Naive thymus-derived CD4-positive, alpha-beta T cell (primary cell): ENCODE measurements at regions of chr9 and their contacts with region 1.

Region 1: DNA sequence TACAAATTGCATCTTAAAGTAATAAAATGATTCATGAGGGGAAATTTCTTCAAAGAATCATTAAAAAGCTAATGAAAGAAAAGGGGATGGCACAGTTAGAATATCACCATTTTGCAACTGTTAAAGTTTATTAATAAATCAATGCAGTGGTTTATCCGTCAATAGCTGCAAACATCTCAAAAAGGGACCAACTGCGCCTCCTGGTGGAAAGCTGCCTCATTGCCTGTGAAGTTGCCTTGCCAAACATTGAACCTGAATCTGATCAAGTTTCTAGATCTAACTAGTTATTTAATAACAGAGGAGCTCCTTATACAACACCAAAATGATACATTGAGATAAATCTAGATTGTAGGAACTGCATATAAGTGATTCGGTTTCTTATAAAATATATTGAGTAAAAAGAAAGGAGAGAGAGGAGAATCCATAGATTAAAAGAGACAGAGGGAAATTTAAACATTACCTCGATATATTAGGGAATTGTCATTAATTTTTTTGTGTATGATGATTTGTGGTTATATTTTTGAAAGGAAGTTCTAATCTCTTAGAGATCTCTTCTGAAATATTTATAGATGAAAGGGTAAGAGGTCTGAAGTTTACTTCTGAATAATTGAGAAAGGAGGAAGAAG is 6.9 kb upstream of the NDUFB6 start:
- DNase-seq: peak; percentile 53 to 77 (median 66)
- ATAC-seq: peak; percentile 81
- H3K4me3 ChIP-seq: no peak overlapping the region
- H3K4me3 Mint-ChIP-seq: no peak overlapping the region
- H3K27ac ChIP-seq: no peak overlapping the region
- H3K27ac Mint-ChIP-seq: peak overlapping the region in 1 of 9 donors; percentile 48
- H3K4me1 ChIP-seq: no peaks in the 10 kb centered on the region
- H3K4me1 Mint-ChIP-seq: peaks cover 0 to 8% (median 0%) of the 10 kb centered on the region in 7 donors
- H3K27me3 ChIP-seq: no peaks in the 10 kb centered on the region
- H3K27me3 Mint-ChIP-seq: peaks cover 4 to 30% (median 7%) of the 10 kb centered on the region in 5 donors

Region 2: DNA sequence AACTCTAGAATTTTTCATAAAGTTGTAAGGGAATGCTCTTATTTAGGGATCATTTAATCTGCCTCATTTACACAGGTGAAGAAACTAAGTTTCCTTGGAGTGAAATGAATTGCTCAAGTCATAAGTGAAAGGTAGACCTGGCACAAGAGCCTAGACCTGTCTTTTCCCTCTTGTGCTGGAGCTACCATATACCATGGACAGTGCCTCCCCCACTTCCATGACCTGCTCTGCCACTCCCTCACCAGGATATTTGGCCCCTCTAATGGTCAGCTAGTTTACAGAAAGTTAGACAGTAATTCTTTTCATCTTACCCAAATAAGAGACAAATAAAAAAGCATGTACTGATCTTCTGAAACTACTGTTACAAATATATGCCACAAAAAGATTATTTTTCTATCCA is 300.8 kb before region 1 on chr9:
- CTCF ChIA-PET with region 1: no interaction called
- POLR2A ChIA-PET with region 1: no interaction called
- intact Hi-C with region 1: no loop called
- DNase-seq: no peak
- ATAC-seq: no peak
- H3K4me3 ChIP-seq: no peak overlapping the region
- H3K4me3 Mint-ChIP-seq: no peak overlapping the region
- H3K27ac ChIP-seq: no peak overlapping the region
- H3K27ac Mint-ChIP-seq: no peak overlapping the region
- H3K4me1 ChIP-seq: no peaks in the 10 kb centered on the region
- H3K4me1 Mint-ChIP-seq: peaks cover 0 to 1% (median 0%) of the 10 kb centered on the region in 7 donors
- H3K27me3 ChIP-seq: no peaks in the 10 kb centered on the region
- H3K27me3 Mint-ChIP-seq: peaks cover 0 to 9% (median 4%) of the 10 kb centered on the region in 5 donors

Region 3: DNA sequence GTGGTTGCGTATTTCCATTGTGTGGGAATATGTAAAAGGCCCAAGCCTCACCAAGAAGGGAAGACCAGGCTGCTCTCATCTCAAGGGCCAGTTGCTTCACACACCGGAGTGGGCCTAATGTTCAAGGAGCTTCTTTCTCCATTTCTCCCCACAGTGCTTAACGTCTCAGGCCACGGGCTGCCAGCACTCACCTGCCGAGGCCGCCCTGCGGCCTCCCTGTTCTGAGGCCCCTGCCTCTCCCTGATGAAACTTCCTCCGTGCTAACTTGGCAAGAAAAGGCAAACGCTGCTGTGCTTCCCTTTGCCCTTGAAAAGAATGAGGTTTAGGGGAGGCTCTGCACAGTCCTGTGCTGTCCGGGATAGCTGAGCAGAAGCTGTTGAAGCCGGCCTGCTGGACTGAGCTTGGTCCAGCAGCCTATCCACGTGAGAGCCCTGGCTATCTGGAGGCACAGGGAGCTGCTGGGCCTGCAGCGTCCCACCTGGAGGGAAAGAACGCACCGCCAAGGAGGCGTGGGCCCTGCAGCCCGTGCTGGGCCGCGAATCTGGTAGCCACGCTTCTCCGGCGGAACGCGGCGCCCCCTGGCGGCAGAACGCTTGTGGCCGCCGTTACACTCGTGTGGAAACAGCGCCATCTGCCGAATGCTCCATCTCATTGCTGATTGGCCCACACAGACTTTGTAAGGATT is 1142.0 kb after region 1 on chr9:
- CTCF ChIA-PET with region 1: no interaction called
- POLR2A ChIA-PET with region 1: no interaction called
- intact Hi-C with region 1: loop called in 1 of 2 experiments (anchors 10 kb)
- DNase-seq: peak; percentile 68 to 90 (median 86)
- ATAC-seq: peak; percentile 93
- H3K4me3 ChIP-seq: no peak overlapping the region
- H3K4me3 Mint-ChIP-seq: peak overlapping the region in 1 of 10 donors; percentile 32
- H3K27ac ChIP-seq: no peak overlapping the region
- H3K27ac Mint-ChIP-seq: peak overlapping the region in 3 of 9 donors; percentile 22 to 55 (median 49)
- H3K4me1 ChIP-seq: no peaks in the 10 kb centered on the region
- H3K4me1 Mint-ChIP-seq: peaks cover 0 to 4% (median 0%) of the 10 kb centered on the region in 7 donors
- H3K27me3 ChIP-seq: no peaks in the 10 kb centered on the region
- H3K27me3 Mint-ChIP-seq: peaks cover 5 to 27% (median 13%) of the 10 kb centered on the region in 5 donors